Activated CD4-positive, alpha-beta T cell treated with anti-CD3 and anti-CD28 coated beads for 36 hours (primary cell): ENCODE measurements at regions of chr19 and their contacts with region 1.

Region 1: DNA sequence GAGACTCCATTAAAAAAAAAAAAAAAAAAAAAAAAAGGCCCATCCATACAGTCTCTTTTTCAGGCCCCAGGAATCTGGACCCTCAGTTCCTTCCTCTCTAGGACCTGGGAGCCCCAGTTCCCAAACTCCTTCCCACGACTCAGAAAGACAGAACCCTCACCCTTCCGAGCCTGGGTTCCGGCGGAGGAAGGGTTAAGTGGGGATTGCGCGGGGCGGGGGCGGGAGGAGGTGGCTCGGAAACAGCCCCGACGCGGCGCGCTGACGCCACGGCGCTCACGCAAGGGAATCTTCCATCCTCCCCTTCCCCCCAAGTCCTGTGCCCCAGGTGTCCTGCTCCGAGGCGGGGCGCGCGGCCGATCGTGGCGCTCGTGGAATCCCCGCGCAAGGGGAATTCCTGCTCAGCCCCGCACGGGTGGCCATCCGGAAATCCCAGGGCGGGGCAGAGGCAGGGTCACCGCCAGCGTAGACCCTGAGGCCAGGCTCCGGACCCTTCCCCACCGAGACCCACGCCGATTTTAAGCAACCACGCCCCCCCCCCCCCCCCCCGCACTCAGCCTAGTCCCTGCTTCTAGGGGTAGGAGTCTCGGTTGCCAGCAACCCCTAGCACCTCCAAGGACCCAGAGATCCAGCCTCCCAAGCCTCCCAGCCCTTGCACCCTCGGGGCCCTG is 659 bp downstream of the NFKBID start:
- DNase-seq: peak; percentile 94
- ATAC-seq: peak; percentile 54
- H3K4me3 Mint-ChIP-seq: peak overlapping the region; percentile 75
- H3K27ac Mint-ChIP-seq: peak overlapping the region; percentile 94
- H3K4me1 Mint-ChIP-seq: peaks cover 65% of the 10 kb centered on the region
- H3K27me3 Mint-ChIP-seq: no peaks in the 10 kb centered on the region

Region 2: GRCh38 chr19:35710784-35711723 is 188.6 kb before region 1 on chr19:
- CTCF ChIA-PET with region 1: interaction called, 3 read pairs
- POLR2A ChIA-PET with region 1: no interaction called
- intact Hi-C with region 1: loop called (anchors 1 kb)
- DNase-seq: peak; percentile 88
- ATAC-seq: peak; percentile 48
- H3K4me3 Mint-ChIP-seq: peak overlapping the region; percentile 56
- H3K27ac Mint-ChIP-seq: peak overlapping the region; percentile 100
- H3K4me1 Mint-ChIP-seq: peaks cover 43% of the 10 kb centered on the region
- H3K27me3 Mint-ChIP-seq: no peaks in the 10 kb centered on the region

Region 3: GRCh38 chr19:35757749-35758608 is 141.7 kb before region 1 on chr19 and contains the start of gene PROSER3:
- CTCF ChIA-PET with region 1: no interaction called
- POLR2A ChIA-PET with region 1: no interaction called
- intact Hi-C with region 1: loop called in 1 of 2 experiments (anchors 1 kb)
- DNase-seq: peak; percentile 99
- ATAC-seq: peak; percentile 98
- H3K4me3 Mint-ChIP-seq: peak within 1 kb of the TSS; percentile 85
- H3K27ac Mint-ChIP-seq: peak within 1 kb of the TSS; percentile 91
- H3K4me1 Mint-ChIP-seq: peaks cover 29% of the 10 kb centered on the region
- H3K27me3 Mint-ChIP-seq: peaks cover 4% of the 10 kb centered on the region
- total RNA-seq, gene PROSER3: 39.8 to 62.8 TPM

Region 4: DNA sequence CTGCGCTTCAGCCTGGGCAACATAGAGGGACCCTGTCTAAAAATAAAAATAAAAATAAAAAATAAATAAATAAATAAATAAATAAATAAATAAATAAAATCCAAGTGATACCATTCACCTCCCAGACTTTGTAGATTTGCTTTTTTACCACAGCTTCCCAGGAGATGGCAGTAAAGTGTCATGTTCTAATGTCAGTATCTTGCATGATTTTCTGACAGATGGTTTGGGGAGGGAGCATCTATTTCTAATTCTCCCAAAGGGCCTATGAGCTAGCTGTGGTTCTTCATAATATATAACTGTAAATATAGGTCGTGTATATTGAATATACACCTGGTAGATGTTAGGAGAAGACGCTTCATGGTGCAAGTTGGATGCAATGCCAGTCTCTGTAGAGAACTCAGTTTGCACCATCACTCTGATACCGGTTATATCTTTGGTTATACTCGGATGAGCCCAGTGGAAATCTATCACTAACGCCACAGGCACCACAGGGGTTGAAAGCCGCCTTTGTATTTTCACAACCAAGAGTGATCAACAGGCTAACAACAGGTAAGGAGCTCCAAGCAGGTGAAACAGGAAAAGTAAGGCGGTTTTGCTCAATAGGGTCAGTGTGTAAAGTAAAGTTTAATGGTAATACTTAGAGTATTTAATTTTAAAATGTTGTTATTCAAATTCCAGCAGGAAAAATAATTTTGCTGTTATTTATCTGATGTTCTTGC is 17.4 kb before region 1 on chr19:
- CTCF ChIA-PET with region 1: interaction called, 11 read pairs
- POLR2A ChIA-PET with region 1: no interaction called
- intact Hi-C with region 1: loop called in 1 of 2 experiments (anchors 1 kb)
- DNase-seq: peak; percentile 35
- ATAC-seq: peak; percentile 53
- H3K4me3 Mint-ChIP-seq: no peak overlapping the region
- H3K27ac Mint-ChIP-seq: no peak overlapping the region
- H3K4me1 Mint-ChIP-seq: peaks cover 2% of the 10 kb centered on the region
- H3K27me3 Mint-ChIP-seq: peaks cover 12% of the 10 kb centered on the region

Region 5: GRCh38 chr19:36014029-36014924 is 114.6 kb after region 1 on chr19 and contains the start of gene ALKBH6:
- CTCF ChIA-PET with region 1: no interaction called
- POLR2A ChIA-PET with region 1: no interaction called
- intact Hi-C with region 1: loop called (anchors 1 kb)
- DNase-seq: peak; percentile 100
- ATAC-seq: peak; percentile 98
- H3K4me3 Mint-ChIP-seq: peak within 1 kb of the TSS; percentile 96
- H3K27ac Mint-ChIP-seq: peak within 1 kb of the TSS; percentile 94
- H3K4me1 Mint-ChIP-seq: peaks cover 32% of the 10 kb centered on the region
- H3K27me3 Mint-ChIP-seq: no peaks in the 10 kb centered on the region
- total RNA-seq, gene ALKBH6: 40.6 to 42.2 TPM